HAP-1 (cell line): ENCODE measurements at regions of chr22 and their contacts with region 1.

Region 1: DNA sequence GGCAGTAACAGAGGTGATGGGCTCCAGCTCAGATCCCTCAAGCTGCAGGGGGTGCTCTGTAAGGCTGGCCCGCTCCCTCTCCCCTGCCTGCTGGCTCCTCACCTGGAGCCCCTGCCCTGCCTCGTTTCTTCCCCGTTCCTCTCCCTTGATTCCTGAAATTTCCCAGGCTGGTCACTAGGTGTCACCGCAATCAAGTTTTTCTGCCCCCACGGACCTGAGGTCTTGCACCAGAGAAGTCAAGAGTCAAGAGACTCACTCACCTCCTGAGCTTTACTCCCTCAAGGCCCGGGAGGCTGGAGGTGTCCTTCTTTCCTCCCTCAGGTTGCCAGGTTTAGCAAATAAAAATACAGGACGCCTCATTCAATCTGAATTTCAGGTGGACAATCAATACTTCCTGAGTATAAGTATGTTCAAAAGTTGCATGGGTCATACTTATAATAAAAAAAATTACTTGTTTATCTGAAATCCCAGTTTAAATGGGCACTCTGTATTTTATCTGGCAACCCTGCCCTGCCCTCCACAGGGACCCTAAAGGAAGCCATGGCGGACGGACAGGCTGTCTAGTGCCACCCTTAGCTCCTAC is 69.2 kb downstream of the SCUBE1 start:
- DNase-seq: peak; percentile 64 to 66
- H3K4me3 ChIP-seq: no peak overlapping the region
- H3K4me1 ChIP-seq: no peaks in the 10 kb centered on the region
- H3K27me3 ChIP-seq: no peaks in the 10 kb centered on the region

Region 2: GRCh38 chr22:43346521-43346929 is 72.5 kb after region 1 on chr22:
- in situ Hi-C with region 1: loop called (anchors 5 kb)
- DNase-seq: peak; percentile 50 to 81
- H3K4me3 ChIP-seq: no peak overlapping the region
- H3K4me1 ChIP-seq: no peaks in the 10 kb centered on the region
- H3K27me3 ChIP-seq: peaks cover 11% of the 10 kb centered on the region

Region 3: DNA sequence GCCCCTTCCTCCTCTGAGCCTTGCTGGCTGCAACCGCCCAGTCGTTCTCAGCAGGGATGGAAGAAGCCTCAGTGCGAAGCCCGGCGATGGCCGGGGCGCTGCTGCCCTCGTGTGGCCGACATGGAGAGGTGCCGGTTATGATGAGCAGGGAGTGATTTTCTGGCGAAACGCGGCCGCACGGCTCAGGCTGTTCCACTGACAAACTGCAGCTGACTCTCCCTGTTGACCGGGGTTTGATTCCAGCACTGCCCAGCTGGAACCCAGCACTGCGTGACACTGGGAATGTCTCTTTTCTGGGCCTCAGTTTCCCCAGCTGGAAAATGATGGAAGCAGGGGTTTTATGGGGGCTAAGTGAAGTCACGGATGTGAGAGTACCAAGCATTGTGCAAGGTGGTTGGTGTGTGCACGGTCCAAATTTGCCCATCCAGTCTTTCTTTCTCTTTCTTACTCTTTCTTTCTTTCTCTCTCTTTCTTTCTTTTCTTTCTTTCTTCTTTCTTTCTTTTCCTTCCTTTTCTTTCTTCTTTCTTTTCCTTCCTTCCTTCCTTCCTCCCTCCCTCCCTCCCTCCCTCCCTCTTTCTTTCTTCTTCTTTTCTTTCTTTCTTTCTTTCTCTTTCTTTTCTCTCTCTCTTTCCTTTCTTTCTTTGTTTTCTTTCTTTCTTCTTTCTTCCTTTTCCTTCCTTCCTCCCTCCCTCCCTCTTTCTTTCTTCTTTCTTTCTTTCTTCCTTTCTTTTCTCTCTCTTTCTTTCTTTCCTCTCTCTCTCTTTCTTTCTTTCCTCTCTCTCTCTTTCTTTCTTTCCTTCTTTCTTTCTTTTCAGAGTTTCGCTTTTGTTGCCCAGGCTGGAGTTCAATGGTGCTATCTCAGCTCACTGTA is 112.0 kb after region 1 on chr22:
- in situ Hi-C with region 1: loop called (anchors 10 kb)
- DNase-seq: peak; percentile 53 to 83
- H3K4me3 ChIP-seq: no peak overlapping the region
- H3K4me1 ChIP-seq: no peaks in the 10 kb centered on the region
- H3K27me3 ChIP-seq: peaks cover 31% of the 10 kb centered on the region

Region 4: DNA sequence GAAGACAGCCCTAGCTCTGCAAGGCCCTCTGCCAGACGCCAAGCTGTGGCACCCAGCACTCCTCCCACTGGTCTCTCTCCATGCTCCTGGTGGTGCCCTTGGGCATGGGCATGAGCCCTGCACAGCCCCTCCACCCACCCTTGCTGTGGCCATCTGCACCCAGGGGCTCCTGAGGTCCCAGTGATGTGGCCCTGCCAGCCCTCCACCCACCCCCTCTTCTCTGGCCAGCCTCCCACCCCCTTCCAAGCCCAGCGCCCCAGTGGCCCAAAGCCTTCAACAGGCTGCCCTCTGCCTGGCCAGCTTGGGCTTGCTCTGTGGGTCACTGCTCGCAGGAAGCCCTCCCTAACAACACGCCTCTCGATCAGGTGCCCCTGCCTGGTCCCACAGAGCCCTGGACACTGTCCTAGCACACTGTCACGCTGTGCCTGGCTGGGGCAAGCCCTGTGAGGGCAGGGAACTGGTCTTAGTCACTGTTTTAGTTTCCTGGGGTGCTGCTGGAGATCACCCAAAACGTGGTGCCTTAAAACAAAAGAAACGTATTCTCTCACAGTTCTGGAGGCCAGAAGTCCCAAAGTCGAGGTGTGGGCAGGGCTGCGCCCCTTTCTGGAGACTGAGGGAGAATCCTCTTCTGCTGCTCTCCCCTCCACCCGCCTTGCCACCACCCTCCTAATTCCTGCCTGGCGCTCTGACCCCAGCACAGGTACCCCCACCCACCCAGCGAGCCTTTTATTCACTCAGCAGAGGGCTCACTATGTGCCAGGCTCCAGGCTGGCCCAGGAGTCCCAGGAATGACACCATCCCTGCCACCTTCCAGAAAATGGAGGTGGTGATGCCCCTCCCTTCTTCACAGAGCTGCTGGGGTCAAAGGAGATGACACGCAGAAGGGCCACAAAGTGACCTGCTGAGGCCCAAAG is 573.6 kb after region 1 on chr22:
- in situ Hi-C with region 1: no loop called
- DNase-seq: no peak
- H3K4me3 ChIP-seq: no peak overlapping the region
- H3K4me1 ChIP-seq: no peaks in the 10 kb centered on the region
- H3K27me3 ChIP-seq: peaks cover 18% of the 10 kb centered on the region